K562 (cell line): ENCODE measurements at regions of chr6 and their contacts with region 1.

Region 1: DNA sequence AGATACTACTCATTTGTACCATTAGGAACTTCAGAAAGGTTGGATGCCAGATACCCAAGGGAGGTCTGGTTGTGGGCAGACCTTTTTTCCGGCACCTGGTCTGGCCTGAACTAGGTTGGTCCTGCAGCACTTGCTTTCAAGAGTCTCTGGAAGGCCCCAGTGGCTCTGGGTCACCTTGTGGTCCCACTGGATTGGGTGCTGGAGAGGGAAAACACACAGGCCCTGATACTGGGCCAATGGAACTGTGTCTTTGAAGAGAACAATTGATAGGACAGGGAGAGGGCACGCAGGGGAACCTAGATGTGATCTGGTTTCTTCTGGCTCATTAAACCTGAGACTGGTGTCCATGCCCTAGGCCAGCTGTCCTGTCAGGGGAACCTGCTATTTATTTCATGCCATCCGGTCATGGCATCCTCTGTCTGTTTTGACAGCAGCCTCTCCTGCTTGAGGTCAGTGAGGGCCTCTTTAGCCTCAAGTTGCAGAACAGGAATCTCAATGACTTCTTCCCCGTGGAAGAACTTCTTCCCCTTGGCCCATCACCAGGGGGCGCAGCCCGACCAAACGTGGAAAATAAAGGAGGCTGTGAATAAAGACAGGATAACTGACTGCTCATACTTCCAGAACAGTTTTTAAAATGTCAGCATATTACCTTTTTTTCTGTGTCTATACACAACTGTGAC is 25.0 kb downstream of the TAF8 start:
- DNase-seq: peak; percentile 70 to 86 (median 77)
- ATAC-seq: peak; percentile 90
- H3K4me3 ChIP-seq: no peak overlapping the region
- H3K27ac ChIP-seq: no peak overlapping the region
- H3K4me1 ChIP-seq: no peaks in the 10 kb centered on the region
- H3K27me3 ChIP-seq: no peaks in the 10 kb centered on the region
- CTCF ChIP-seq: peak; percentile 94 to 98 (median 95)
- EP300 ChIP-seq: no peak
- POLR2A ChIP-seq: no peak
- RAD21 ChIP-seq: peak; percentile 99

Region 2: DNA sequence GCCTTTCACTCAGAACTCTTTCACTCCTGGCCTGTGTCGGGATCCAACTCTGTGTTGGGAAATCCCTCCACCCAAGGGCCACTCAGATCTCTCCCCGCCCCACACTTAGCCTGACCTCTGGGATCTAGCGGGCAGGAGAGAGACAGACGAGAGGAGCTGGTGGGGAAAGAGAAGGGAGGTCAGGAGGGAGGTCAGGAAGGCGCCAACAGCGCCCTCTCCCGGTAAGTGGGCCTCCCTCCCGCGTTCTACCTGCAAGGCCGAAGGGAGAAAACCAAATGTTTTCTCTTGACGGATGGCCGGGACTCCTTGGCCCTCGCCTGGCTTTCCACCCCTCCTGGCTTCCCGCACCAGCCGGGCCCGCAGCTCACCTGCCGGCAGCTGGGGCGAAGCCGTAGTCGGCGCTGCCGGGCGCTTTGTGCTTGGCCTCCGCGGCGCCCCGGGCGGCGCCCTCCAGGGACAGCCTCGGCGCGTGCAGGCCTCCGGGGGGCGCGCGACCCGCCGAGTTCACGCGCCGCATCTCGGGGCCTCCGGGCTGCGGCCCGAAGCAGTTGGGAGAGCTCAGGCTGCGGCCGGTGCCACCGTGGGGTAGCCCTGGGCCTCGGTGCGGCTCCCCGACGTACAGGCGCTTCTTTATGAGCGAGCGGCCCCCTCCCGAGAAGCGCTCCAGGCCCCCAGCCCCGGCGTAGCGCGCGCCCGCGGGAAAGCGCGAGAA is 29.0 kb after region 1 on chr6:
- CTCF ChIA-PET with region 1: interaction called, 26 read pairs
- POLR2A ChIA-PET with region 1: interaction called, 7 read pairs
- in situ Hi-C with region 1: no loop called
- intact Hi-C with region 1: loop called (anchors 1 kb)
- DNase-seq: peak; percentile 93 to 96 (median 94)
- ATAC-seq: peak; percentile 88
- H3K4me3 ChIP-seq: peak overlapping the region; percentile 50
- H3K27ac ChIP-seq: peak overlapping the region; percentile 74
- H3K4me1 ChIP-seq: peaks cover 43 to 56% of the 10 kb centered on the region in 2 experiments
- H3K27me3 ChIP-seq: peaks cover 3 to 6% of the 10 kb centered on the region in 2 experiments; a peak in 2 of 5 replicates
- CTCF ChIP-seq: peak; percentile 89 to 99 (median 94)
- EP300 ChIP-seq: no peak
- POLR2A ChIP-seq: peak; percentile 79
- RAD21 ChIP-seq: peak; percentile 84 to 85

Region 3: GRCh38 chr6:42129069-42129676 is 53.9 kb after region 1 on chr6:
- CTCF ChIA-PET with region 1: interaction called, 7 read pairs
- POLR2A ChIA-PET with region 1: interaction called, 4 read pairs
- in situ Hi-C with region 1: no loop called
- intact Hi-C with region 1: loop called (anchors 2 kb)
- DNase-seq: peak; percentile 41 to 77 (median 60)
- ATAC-seq: peak; percentile 71
- H3K4me3 ChIP-seq: no peak overlapping the region
- H3K27ac ChIP-seq: no peak overlapping the region
- H3K4me1 ChIP-seq: peaks cover 12 to 31% of the 10 kb centered on the region in 2 experiments; a peak in 4 of 5 replicates
- H3K27me3 ChIP-seq: peaks cover 0 to 6% of the 10 kb centered on the region in 2 experiments; a peak in 1 of 5 replicates
- CTCF ChIP-seq: peak; percentile 38 to 62 (median 54); a peak in 5 of 6 replicates
- EP300 ChIP-seq: peak; percentile 39
- POLR2A ChIP-seq: no peak
- RAD21 ChIP-seq: peak; percentile 48 to 76

Region 4: GRCh38 chr6:42230345-42231321 is 155.3 kb after region 1 on chr6:
- CTCF ChIA-PET with region 1: interaction called, 18 read pairs
- POLR2A ChIA-PET with region 1: interaction called, 4 read pairs
- in situ Hi-C with region 1: no loop called
- intact Hi-C with region 1: loop called (anchors 1 kb)
- DNase-seq: peak in 3 of 4 experiments; percentile 40 to 68 (median 58)
- ATAC-seq: peak; percentile 69
- H3K4me3 ChIP-seq: no peak overlapping the region
- H3K27ac ChIP-seq: no peak overlapping the region
- H3K4me1 ChIP-seq: peaks cover 14 to 21% of the 10 kb centered on the region in 2 experiments
- H3K27me3 ChIP-seq: no peaks in the 10 kb centered on the region
- CTCF ChIP-seq: peak; percentile 62 to 83 (median 80)
- EP300 ChIP-seq: no peak
- POLR2A ChIP-seq: no peak
- RAD21 ChIP-seq: peak; percentile 66 to 82